Left cardiac atrium (tissue), 4 donors: ENCODE measurements at regions of chr1 and their contacts with region 1.

Region 1: GRCh38 chr1:8374812-8375211 is 56.9 kb downstream of the SLC45A1 start:
- DNase-seq: no peak
- ATAC-seq: no peak

Region 2: GRCh38 chr1:8409106-8409505 is 34.3 kb after region 1 on chr1:
- intact Hi-C with region 1: loop called (anchors 5 kb)
- DNase-seq: no peak
- ATAC-seq: peak; percentile 50 to 52

Region 3: DNA sequence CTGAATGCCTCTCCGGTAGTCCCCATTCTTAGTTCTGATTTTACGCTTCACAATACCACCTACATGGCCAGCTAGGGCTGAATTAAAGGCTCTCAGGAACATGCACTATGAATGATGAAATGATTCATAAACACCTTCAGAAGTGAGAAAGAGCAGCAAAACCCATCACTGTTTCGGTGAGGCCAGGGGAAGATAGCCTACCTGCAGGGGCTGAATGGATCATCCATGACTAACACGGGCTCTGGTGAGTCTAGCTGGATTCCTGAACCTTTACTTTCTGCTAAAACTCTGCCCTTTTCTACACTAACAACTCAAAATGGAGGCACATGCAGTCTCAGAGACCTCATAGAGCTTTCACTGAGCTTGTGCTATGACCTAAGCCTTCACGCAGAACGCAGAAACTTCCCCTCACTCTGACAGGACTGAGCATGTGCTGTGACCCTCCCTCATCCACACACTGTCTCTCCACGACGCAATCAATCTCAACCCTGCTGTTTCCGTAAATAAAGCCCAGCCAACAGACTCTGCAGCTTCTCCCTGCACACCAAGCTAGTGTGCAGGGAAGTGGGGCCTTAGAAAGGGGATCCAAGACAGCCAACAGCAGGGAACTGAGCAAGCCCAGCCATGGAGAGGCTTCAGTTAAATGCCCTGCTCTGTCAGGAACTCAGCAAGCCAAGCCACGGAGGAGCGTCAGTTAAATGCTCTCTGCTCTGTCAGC is 150.9 kb after region 1 on chr1:
- intact Hi-C with region 1: loop called in 1 of 2 experiments (anchors 10 kb)
- DNase-seq: peak; percentile 86
- ATAC-seq: peak; percentile 99 to 100